Naive thymus-derived CD8-positive, alpha-beta T cell (primary cell): ENCODE measurements at regions of chr11 and their contacts with region 1.

Region 1: DNA sequence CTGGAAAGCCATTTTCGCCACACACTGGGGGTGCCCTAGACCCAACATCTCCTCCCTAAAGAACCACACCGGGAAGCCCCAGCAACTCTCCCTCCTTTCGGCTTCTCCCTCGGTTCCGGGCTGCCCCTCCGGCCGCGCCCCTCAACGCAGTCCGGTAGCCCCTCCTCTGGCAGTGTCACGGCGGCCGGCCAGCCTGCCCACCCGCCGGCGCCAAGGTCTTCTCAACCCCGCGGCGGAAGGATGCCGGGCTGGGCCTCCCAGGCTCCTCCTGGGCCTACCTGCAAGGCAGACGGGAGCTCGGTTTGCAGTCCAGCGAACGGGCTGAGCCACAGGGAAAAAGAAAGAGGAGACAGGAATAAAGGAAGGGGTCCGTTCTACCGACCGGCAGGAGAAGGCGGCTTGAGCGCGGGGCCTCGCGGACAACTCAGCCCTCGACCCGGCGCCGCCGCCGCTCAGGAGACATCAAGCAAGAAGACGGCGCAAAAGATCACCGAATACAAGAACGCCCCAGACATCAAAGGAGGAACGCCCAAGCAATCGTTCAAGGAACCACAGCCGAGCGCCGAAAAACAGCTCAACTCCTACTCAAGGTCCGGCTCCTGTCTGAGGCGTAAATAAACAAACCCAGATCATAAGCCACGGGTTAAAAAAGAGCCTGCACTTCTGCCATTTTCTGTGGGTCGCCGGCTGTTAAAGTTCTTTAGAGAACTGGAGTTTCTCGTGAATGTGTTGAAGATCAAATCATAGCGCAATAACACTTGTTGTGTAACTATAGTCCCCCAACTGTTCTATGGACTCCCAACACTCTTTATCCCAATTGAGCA is at the start of gene AMBRA1:
- DNase-seq: peak; percentile 53 to 87 (median 80)
- ATAC-seq: peak; percentile 95 to 96
- H3K4me3 Mint-ChIP-seq: peak within 1 kb of the TSS; percentile 93 to 99 (median 96)
- H3K27ac Mint-ChIP-seq: peak within 1 kb of the TSS; percentile 91 to 97 (median 96)
- H3K4me1 Mint-ChIP-seq: peaks cover 22 to 50% (median 47%) of the 10 kb centered on the region in 4 donors
- H3K27me3 Mint-ChIP-seq: no peaks in the 10 kb centered on the region
- polyA plus RNA-seq, gene AMBRA1: 6.1 to 16.3 (median 7.4) TPM

Region 2: DNA sequence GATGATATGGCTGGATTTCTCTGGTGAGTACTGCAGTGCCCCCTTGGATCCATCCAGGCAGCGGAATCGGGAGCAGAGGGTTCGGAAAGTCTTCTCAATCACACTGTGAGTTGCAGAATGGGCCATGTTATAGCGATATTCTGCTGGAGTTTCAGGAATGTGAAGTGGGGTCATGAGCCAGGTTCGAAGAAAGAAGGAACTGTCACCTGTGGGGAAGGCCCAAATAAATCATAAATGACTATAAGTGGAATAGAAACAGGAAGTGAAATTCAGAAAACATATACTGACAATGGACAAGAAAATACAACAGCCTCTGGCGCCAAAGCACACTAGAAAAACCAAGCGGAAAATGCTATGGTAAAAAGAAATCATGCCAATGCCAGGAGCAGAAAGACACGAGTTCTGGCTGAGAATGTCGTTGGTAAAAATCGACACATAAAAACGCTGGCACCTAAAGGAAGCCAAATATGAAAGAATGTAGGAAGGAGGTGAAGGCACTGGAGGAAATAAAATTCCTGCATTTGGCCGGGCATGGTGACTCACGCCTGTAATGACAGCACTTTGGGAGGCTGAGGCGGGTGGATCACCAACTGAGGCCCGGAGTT is 10.0 kb after region 1 on chr11:
- POLR2A ChIA-PET with region 1: no interaction called
- DNase-seq: no peak
- ATAC-seq: no peak
- H3K4me3 Mint-ChIP-seq: no peak overlapping the region
- H3K27ac Mint-ChIP-seq: peak overlapping the region in 1 of 10 donors; percentile 26
- H3K4me1 Mint-ChIP-seq: peaks cover 0 to 4% (median under 1%) of the 10 kb centered on the region in 4 donors
- H3K27me3 Mint-ChIP-seq: no peaks in the 10 kb centered on the region

Region 3: DNA sequence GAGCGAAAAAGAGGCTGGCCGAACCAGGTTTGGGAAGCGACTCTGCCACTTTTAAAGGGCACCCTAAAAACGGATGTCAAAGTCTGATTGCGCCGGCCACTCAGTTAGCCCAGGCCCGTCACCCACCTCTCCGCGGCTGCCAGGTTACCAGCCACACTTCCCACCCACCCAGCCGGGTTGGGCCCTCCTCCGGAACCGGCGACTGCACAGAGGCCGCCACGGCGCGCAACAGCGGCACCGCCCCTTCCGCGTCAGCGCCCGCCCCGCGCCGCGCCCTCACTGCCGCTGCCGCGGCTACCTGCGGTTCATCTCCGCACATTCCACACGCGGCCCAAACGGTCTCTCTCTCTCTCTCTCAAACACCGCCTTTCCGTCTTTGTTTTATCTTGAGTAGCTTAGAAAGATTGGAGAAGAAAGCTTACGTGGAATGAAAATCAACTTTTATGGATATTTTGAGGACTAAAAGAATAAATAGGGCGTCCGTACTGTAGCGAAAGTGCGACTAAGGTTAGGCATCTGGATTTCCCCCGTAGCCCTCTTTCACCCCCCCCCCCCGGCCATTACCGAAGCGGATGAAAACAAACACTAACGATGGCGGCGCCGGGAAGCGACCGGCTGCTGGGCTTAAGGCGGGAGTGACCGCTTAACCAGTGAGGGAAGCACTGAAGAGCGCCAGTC is 23.4 kb after region 1 on chr11 and contains the starts of genes ATG13 and HARBI1:
- POLR2A ChIA-PET with region 1: interaction called, 30 read pairs
- DNase-seq: peak; percentile 86 to 95 (median 92)
- ATAC-seq: peak; percentile 94 to 95
- H3K4me3 Mint-ChIP-seq: peak within 1 kb of the TSS; percentile 94 to 100 (median 99)
- H3K27ac Mint-ChIP-seq: peak within 1 kb of the TSS; percentile 98 to 100 (median 100)
- H3K4me1 Mint-ChIP-seq: peaks cover 19 to 55% (median 46%) of the 10 kb centered on the region in 4 donors
- H3K27me3 Mint-ChIP-seq: no peaks in the 10 kb centered on the region
- polyA plus RNA-seq, gene ATG13: 59.6 to 77.9 (median 67.6) TPM
- polyA plus RNA-seq, gene HARBI1: 5.5 to 7.7 (median 6.0) TPM